ENCODE measurements at regions of chr2 and their contacts with region 1.

Region 1: GRCh38 chr2:230658877-230659652 is 53.6 kb upstream of the CAB39 start:
- DNase-seq: peak; percentile 80
- H3K4me3 Mint-ChIP-seq: peak overlapping the region; percentile 91
- H3K27ac Mint-ChIP-seq: peak overlapping the region; percentile 99
- H3K4me1 Mint-ChIP-seq: peaks cover 83% of the 10 kb centered on the region
- H3K27me3 Mint-ChIP-seq: no peaks in the 10 kb centered on the region

Region 2: GRCh38 chr2:230234845-230235244 is 424.2 kb before region 1 on chr2:
- intact Hi-C with region 1: loop called (anchors 1 kb)
- DNase-seq: no peak
- H3K4me3 Mint-ChIP-seq: peak overlapping the region; percentile 73
- H3K27ac Mint-ChIP-seq: peak overlapping the region; percentile 98
- H3K4me1 Mint-ChIP-seq: peaks cover 55% of the 10 kb centered on the region
- H3K27me3 Mint-ChIP-seq: no peaks in the 10 kb centered on the region

Region 3: DNA sequence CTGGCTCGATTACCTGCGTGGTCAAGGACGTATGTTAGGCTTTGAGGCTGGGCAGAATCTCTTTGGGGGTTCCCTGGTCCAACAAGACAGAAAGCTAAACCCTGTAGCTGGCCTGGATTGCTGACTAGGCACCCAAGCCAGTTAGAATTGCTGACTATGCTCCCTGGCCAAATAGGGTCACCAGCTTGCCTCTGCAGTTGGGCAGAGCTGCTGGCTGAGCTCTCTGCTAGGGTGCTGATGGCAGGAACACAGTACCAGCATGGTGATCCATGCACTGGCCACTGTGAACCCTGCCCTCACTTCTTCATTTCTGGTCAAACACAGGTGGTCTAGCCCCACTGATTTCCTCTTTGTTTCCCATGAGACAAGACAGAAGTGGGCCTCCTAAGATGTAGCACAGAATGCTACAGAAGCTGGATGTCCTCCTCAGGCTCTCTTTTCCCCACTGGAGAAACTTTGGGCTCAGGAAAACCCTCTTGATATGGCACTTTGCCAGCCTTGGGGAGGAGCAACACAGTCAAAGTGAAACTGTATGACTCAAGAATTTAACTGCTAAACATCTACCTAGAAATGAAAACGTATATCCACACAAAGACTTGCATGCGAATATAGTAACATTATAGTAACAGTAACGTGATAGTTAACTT is 311.3 kb before region 1 on chr2:
- intact Hi-C with region 1: loop called (anchors 5 kb)
- DNase-seq: peak; percentile 45
- H3K4me3 Mint-ChIP-seq: peak overlapping the region; percentile 61
- H3K27ac Mint-ChIP-seq: peak overlapping the region; percentile 94
- H3K4me1 Mint-ChIP-seq: peaks cover 73% of the 10 kb centered on the region
- H3K27me3 Mint-ChIP-seq: no peaks in the 10 kb centered on the region

Region 4: DNA sequence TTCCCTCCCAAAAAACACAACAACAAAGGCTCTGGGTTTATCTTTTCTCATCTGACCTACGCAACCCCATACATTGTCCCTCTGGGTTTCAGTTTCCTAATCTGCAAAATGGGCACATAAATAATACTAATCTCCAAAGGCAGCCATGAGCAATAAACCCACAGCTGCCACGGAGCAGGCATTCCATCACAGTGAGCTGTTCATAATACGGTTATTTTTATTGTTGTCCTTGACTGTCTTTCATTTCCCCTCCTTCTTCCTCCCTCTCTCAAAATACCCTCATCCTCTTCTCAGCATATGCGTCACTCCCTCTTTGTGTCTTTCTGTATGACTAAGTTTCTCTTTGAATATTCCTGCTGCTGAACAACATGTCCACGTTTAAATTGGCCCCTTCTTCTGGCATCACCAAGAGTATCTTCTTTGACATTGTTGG is 76.2 kb before region 1 on chr2:
- intact Hi-C with region 1: loop called (anchors 5 kb)
- DNase-seq: no peak
- H3K4me3 Mint-ChIP-seq: no peak overlapping the region
- H3K27ac Mint-ChIP-seq: peak overlapping the region; percentile 75
- H3K4me1 Mint-ChIP-seq: peaks cover 29% of the 10 kb centered on the region
- H3K27me3 Mint-ChIP-seq: no peaks in the 10 kb centered on the region

Region 5: GRCh38 chr2:230601510-230601909 is 57.6 kb before region 1 on chr2:
- intact Hi-C with region 1: no loop called
- DNase-seq: no peak
- H3K4me3 Mint-ChIP-seq: no peak overlapping the region
- H3K27ac Mint-ChIP-seq: peak overlapping the region; percentile 29
- H3K4me1 Mint-ChIP-seq: peaks cover 56% of the 10 kb centered on the region
- H3K27me3 Mint-ChIP-seq: no peaks in the 10 kb centered on the region

Region 6: GRCh38 chr2:230643576-230644291 is 15.3 kb before region 1 on chr2:
- intact Hi-C with region 1: loop called (anchors 1 kb)
- DNase-seq: peak; percentile 51
- H3K4me3 Mint-ChIP-seq: peak overlapping the region; percentile 40
- H3K27ac Mint-ChIP-seq: peak overlapping the region; percentile 98
- H3K4me1 Mint-ChIP-seq: peaks cover 24% of the 10 kb centered on the region
- H3K27me3 Mint-ChIP-seq: no peaks in the 10 kb centered on the region

Region 7: DNA sequence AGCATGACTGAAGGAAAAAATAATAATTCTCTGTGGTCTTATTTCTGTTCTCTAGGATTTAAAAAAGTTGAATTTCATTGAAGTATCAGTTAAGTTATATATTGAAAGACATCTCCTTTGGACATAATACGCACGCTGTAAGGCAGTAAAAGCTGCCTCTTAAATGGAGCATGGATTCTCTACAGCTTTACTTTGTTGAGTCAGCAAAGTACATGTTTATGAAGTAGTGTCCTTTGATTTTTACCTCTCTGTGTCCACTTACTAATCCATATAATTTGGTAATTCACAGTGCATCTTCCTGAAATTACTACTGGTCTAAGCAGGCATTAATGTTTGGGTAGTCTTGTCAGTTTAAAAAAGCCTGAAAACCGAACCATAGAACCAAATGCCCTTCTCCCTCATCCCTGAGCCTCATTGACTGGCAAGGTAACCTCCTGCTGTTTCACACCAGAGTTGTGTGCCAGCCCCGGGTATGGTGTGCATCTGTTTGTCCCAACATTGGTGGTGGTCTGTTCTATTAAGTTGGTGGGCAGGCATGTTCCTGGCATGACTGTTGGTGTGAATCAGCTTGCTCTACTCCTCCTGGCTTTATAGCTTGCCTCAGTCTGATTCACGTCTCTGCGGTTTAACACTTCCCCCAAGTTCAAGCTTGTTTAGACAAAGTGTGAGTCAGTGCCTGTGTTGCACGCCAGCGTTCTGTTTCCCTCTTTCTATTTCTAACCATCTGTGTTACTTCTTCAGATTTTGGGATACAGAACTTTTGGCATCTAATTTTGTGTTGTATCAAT is 134.7 kb after region 1 on chr2:
- intact Hi-C with region 1: loop called (anchors 1 kb)
- DNase-seq: peak; percentile 69
- H3K4me3 Mint-ChIP-seq: peak overlapping the region; percentile 60
- H3K27ac Mint-ChIP-seq: peak overlapping the region; percentile 94
- H3K4me1 Mint-ChIP-seq: peaks cover 50% of the 10 kb centered on the region
- H3K27me3 Mint-ChIP-seq: no peaks in the 10 kb centered on the region

Region 8: DNA sequence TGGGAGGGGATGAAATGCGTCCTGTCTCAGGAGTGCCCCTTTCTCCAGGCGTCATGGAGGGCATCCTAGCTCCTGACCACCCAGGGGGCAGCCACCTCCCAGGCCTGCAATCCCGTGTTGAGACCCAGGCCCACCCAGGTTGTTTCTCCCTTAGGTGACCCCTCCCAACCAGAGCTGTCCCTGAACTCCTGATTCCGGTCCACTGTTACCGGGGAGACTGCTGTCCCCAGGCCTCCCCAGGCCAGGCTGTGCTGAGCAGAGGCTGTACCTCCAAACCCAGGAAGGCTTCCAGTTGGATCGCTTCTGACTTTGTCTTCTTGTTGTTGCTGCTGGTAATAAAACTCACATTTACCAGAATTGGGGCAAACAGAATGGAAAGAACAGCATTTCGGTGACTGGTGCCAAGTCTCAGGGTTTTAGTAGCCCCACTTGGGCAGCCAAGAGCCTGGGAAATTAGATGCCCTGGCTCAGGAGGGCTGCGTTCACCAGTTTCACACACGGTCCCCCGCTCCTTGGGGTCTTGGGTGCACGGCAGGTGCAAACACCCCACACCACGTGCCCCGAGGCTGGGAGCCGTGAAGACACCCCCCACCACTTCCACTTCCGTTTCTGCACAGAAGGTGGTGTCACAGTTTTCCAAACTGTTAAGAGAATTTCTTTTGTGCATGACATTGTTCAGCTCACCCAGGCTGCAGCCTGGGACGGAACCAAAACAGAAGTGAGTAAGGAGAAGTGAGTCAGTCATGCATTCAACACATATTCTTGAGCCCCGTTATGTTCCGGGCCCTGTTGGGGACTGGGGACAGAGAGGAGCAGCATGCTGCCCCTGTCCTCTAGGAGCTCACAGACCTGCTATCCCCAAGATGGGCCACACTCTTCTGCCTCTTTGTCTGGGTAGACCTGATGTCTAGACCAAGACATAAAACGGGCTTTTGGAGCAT is 235.0 kb after region 1 on chr2:
- intact Hi-C with region 1: no loop called
- DNase-seq: no peak
- H3K4me3 Mint-ChIP-seq: no peak overlapping the region
- H3K27ac Mint-ChIP-seq: no peak overlapping the region
- H3K4me1 Mint-ChIP-seq: peaks cover 8% of the 10 kb centered on the region
- H3K27me3 Mint-ChIP-seq: peaks cover 37% of the 10 kb centered on the region

Measured in activated T-helper 2 cell treated with anti-CD3 and anti-CD28 coated beads, Interferon-gamma antibody, Interleukin-2, Interleukin-4, amounts not matched to agents 10 μg/mL and 5 μg/mL and 100 μg/mL, durations not matched to agents 14 hours and 24 hours and 36 hours (primary cell).